ENCODE measurements at regions of chr6 and their contacts with region 1.

Region 1: GRCh38 chr6:110039364-110039980 is 61.4 kb downstream of the GPR6 start:
- DNase-seq: peak; percentile 74
- H3K4me3 ChIP-seq: no peak overlapping the region
- H3K27ac ChIP-seq: no peak overlapping the region
- H3K4me1 ChIP-seq: peaks cover 3% of the 10 kb centered on the region
- H3K27me3 ChIP-seq: no peaks in the 10 kb centered on the region
- CTCF ChIP-seq: peak; percentile 88 to 97

Region 2: DNA sequence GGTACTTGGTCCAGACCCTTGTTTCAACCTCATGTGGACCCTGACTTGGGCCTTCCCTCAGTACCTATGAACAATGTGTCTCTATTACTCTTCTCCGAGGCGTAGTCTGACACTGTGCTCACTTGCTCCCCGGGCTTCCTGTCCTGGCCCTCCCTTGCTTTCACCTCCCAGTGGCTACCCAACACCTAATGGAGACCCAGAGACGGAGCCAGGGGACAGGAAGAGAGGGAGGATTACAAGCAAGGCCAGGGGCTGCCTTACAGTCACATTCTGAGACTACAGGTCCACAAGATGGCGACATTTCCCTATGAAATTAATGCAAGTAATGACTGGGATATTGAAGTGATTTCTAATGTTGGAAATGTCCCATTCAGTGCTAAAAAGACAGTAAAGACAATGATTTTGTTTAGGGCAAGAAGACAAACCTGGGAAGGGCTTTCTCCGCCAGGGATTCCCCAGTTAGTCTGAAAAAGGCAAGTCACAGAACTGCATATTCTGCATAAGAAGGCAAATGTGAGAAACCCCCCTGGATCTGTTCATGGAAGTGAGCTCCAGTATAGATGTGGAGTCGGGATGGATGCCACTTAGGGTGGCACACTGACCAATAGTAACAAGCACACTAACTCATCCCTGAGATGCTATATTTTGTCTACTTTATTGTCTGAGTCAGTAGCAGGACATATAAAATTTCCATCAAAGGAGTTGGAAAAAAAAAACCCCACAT is 512.4 kb before region 1 on chr6:
- CTCF ChIA-PET with region 1: interaction called, 5 read pairs
- dilution Hi-C with region 1: no loop called
- in situ Hi-C with region 1: loop called (anchors 10 to 25 kb)
- intact Hi-C with region 1: loop called (anchors 1 kb)
- DNase-seq: peak; percentile 44
- H3K4me3 ChIP-seq: no peak overlapping the region
- H3K27ac ChIP-seq: no peak overlapping the region
- H3K4me1 ChIP-seq: no peaks in the 10 kb centered on the region
- H3K27me3 ChIP-seq: peaks cover 4% of the 10 kb centered on the region
- CTCF ChIP-seq: peak; percentile 34 to 65

Region 3: DNA sequence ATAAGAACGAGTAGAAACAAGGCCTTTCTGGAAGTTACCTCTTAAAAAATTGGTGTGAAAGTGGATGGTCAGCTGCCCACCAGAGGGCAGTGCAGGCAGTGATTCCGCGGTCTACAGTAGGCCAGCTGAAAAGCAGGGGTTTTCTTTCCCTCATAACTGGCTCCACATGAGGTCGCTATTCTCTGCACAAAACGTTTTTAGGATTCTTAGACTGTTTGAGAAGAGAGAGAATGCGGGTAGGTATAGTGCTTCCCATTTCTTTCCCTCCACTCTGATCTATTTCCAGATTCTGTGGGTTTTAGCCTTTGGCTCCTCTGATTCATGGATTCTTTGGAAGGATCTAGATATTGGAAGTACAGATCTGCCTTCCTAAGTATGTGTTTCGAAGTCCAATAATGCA is 334.2 kb before region 1 on chr6:
- CTCF ChIA-PET with region 1: interaction called, 10 read pairs
- dilution Hi-C with region 1: no loop called
- in situ Hi-C with region 1: loop called in 1 of 2 experiments (anchors 10 kb)
- intact Hi-C with region 1: loop called (anchors 1 kb)
- DNase-seq: peak; percentile 72
- H3K4me3 ChIP-seq: no peak overlapping the region
- H3K27ac ChIP-seq: no peak overlapping the region
- H3K4me1 ChIP-seq: no peaks in the 10 kb centered on the region
- H3K27me3 ChIP-seq: no peaks in the 10 kb centered on the region
- CTCF ChIP-seq: peak; percentile 96

Region 4: GRCh38 chr6:109892436-109893435 is 146.7 kb before region 1 on chr6:
- CTCF ChIA-PET with region 1: interaction called, 3 read pairs
- dilution Hi-C with region 1: no loop called
- in situ Hi-C with region 1: no loop called
- intact Hi-C with region 1: loop called (anchors 1 kb)
- DNase-seq: peak; percentile 79
- H3K4me3 ChIP-seq: no peak overlapping the region
- H3K27ac ChIP-seq: no peak overlapping the region
- H3K4me1 ChIP-seq: peaks cover 15% of the 10 kb centered on the region
- H3K27me3 ChIP-seq: no peaks in the 10 kb centered on the region
- CTCF ChIP-seq: peak in 1 of 2 donors; percentile 24

Region 5: GRCh38 chr6:110098511-110099116 is 59.1 kb after region 1 on chr6:
- CTCF ChIA-PET with region 1: interaction called, 12 read pairs
- dilution Hi-C with region 1: no loop called
- in situ Hi-C with region 1: no loop called
- intact Hi-C with region 1: no loop called
- DNase-seq: peak; percentile 98
- H3K4me3 ChIP-seq: no peak overlapping the region
- H3K27ac ChIP-seq: peak overlapping the region; percentile 95
- H3K4me1 ChIP-seq: peaks cover 46% of the 10 kb centered on the region
- H3K27me3 ChIP-seq: no peaks in the 10 kb centered on the region
- CTCF ChIP-seq: no peak

Region 6: GRCh38 chr6:110125361-110125760 is 85.9 kb after region 1 on chr6:
- CTCF ChIA-PET with region 1: no interaction called
- dilution Hi-C with region 1: no loop called
- in situ Hi-C with region 1: no loop called
- intact Hi-C with region 1: no loop called
- DNase-seq: no peak
- H3K4me3 ChIP-seq: no peak overlapping the region
- H3K27ac ChIP-seq: no peak overlapping the region
- H3K4me1 ChIP-seq: no peaks in the 10 kb centered on the region
- H3K27me3 ChIP-seq: no peaks in the 10 kb centered on the region
- CTCF ChIP-seq: no peak

Measured in mammary epithelial cell (primary cell).